T-cell (primary cell): ENCODE measurements at regions of chr9 and their contacts with region 1.

Region 1: DNA sequence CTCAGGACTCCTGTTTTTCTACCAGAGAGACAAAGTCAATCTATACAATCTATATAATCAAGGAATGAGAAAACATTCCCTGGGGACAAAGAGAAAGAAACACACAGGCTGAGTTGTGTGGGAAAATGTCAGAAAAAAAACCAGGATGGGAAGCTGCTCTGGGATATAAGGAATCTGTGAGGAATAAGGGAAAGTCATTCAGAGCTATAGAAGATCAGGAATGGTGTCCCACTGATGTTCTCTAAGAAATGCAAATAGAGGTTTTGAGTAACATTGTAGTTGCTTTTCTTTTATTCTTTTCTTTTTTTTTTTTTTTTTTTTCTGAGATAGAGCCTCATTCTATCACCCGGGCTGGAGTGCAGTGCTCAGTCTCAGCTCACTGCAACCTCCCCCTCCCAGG is 605.9 kb upstream of the KLF4 start:
- DNase-seq: no peak
- ATAC-seq: no peak
- H3K4me3 ChIP-seq: no peak overlapping the region
- H3K4me3 Mint-ChIP-seq: no peak overlapping the region
- H3K27ac ChIP-seq: no peak overlapping the region
- H3K27ac Mint-ChIP-seq: no peak overlapping the region
- H3K4me1 ChIP-seq: no peaks in the 10 kb centered on the region
- H3K4me1 Mint-ChIP-seq: no peaks in the 10 kb centered on the region
- H3K27me3 ChIP-seq: peaks cover 0 to 3% of the 10 kb centered on the region in 2 experiments
- H3K27me3 Mint-ChIP-seq: peaks cover 0 to 2% of the 10 kb centered on the region in 2 donors

Region 2: GRCh38 chr9:108117795-108118194 is 22.3 kb after region 1 on chr9:
- CTCF ChIA-PET with region 1: no interaction called
- POLR2A ChIA-PET with region 1: interaction called in 1 of 2 experiments, 12 read pairs
- DNase-seq: no peak
- ATAC-seq: no peak
- H3K4me3 ChIP-seq: no peak overlapping the region
- H3K4me3 Mint-ChIP-seq: no peak overlapping the region
- H3K27ac ChIP-seq: no peak overlapping the region
- H3K27ac Mint-ChIP-seq: no peak overlapping the region
- H3K4me1 ChIP-seq: no peaks in the 10 kb centered on the region
- H3K4me1 Mint-ChIP-seq: no peaks in the 10 kb centered on the region
- H3K27me3 ChIP-seq: no peaks in the 10 kb centered on the region
- H3K27me3 Mint-ChIP-seq: no peaks in the 10 kb centered on the region

Region 3: GRCh38 chr9:108130917-108131316 is 35.4 kb after region 1 on chr9:
- CTCF ChIA-PET with region 1: no interaction called
- POLR2A ChIA-PET with region 1: no interaction called
- DNase-seq: no peak
- ATAC-seq: no peak
- H3K4me3 ChIP-seq: no peak overlapping the region
- H3K4me3 Mint-ChIP-seq: no peak overlapping the region
- H3K27ac ChIP-seq: no peak overlapping the region
- H3K27ac Mint-ChIP-seq: no peak overlapping the region
- H3K4me1 ChIP-seq: no peaks in the 10 kb centered on the region
- H3K4me1 Mint-ChIP-seq: no peaks in the 10 kb centered on the region
- H3K27me3 ChIP-seq: no peaks in the 10 kb centered on the region
- H3K27me3 Mint-ChIP-seq: no peaks in the 10 kb centered on the region